Sciatic nerve (tissue), 2 donors: ENCODE measurements at regions of chr15 and their contacts with region 1.

Region 1: DNA sequence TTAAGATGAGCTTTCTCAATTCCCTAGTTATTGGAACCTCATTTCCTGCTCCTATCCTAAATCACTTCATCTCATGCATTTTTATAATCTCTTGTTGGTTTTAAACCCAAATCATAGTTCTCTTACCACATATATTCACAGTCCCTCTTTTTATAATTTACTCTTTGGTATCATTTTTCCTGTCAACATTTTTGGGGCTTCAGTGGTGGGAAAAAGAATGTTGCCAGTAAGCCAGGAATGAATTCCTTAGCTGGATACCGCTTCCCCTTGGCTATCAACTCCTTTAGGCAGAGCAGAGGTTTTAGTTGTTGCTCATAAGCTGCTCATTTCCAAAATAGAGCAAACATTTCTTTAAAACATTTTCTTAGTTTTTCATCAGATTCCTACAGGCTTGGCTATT is 112.3 kb downstream of the GALK2 start:
- DNase-seq: no peak
- ATAC-seq: no peak

Region 2: GRCh38 chr15:47577000-47577399 is 1705.4 kb before region 1 on chr15:
- intact Hi-C with region 1: no loop called
- DNase-seq: no peak
- ATAC-seq: peak; percentile 60

Region 3: DNA sequence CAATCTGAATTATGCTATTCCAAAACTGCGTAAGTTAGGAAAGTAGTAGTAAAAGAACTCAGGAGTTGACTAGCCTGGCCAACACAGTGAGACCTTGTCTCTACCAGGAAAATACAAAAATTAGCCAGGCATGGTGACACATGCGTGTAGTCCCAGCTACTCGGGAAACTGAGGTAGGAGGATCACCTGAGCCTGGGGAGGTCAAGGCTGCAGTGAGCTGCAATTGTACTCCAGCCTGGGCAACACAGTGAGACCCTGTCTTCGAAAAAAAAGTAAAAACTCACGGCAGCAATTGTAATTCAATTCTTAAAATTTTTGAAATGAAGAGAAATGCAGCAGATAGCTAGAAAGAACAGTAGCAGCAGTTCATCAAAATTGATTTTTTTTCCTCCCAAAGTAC is 1062.9 kb after region 1 on chr15:
- intact Hi-C with region 1: loop called (anchors 5 kb)
- DNase-seq: no peak
- ATAC-seq: no peak